PC-9 (cell line): ENCODE measurements at regions of chr9 and their contacts with region 1.

Region 1: DNA sequence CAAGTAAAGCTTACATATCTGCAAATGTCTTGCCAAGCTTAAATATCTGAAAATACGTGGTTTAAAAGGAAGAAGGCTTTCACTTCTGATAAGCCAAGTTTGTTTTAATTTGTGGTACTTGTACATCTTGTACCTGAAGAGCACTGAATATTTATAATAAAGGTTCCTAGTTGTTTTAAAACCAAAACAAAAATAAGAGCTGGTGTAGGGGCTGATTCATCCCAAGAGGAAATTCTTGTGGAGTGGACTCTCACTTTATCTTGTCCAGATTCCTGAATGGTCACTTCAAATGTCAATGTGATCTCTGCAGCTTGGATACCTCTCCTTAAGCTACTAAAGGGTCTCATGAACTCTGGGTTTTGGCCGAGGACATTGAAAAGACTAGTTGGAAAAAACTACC is 29.5 kb downstream of the MAMDC2 start:
- DNase-seq: no peak
- H3K4me3 ChIP-seq: no peak overlapping the region
- H3K27ac ChIP-seq: no peak overlapping the region
- H3K4me1 ChIP-seq: no peaks in the 10 kb centered on the region
- H3K27me3 ChIP-seq: no peaks in the 10 kb centered on the region
- CTCF ChIP-seq: no peak

Region 2: DNA sequence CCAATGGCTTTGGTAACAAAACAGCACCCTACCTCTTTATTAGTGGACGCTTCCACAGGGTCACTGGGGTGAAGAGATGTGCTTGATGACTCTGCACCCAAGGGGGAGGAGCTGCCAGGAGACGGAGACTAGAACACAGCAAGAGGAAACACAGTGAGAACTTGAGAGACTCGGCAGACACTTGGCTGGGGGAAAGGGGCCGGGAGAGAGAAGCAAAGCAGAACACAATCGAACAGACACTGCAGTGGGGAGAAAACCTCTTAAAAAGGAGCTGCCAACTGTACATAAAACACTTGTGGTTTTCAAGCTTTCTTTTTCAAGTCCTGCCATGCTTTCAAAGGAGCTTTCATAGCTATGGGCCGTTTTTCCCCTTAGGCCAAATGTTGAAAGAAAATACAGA is 597.2 kb before region 1 on chr9:
- CTCF ChIA-PET with region 1: no interaction called
- POLR2A ChIA-PET with region 1: no interaction called
- intact Hi-C with region 1: no loop called
- DNase-seq: no peak
- H3K4me3 ChIP-seq: no peak overlapping the region
- H3K27ac ChIP-seq: no peak overlapping the region
- H3K4me1 ChIP-seq: no peaks in the 10 kb centered on the region; the same call in 1 of the 2 replicates
- H3K27me3 ChIP-seq: no peaks in the 10 kb centered on the region
- CTCF ChIP-seq: no peak

Region 3: DNA sequence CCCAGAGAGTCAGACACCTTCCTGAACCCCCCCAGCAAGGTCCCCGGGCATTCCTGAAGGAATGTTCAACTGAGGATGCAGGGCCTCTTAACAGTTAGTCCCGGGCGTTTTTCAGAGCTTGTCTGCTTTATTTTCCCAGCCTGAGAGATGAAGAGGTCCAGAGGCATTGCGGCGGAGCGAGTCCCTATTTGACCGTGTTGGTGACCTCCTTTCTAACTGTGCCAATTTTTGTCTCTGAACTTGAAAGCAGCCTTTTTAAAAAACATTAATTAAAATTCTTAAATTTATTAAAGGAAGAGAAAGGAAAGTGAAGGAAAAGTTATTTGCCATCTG is 312.9 kb before region 1 on chr9:
- CTCF ChIA-PET with region 1: no interaction called
- POLR2A ChIA-PET with region 1: no interaction called
- intact Hi-C with region 1: no loop called
- DNase-seq: no peak
- H3K4me3 ChIP-seq: peak overlapping the region; percentile 67; the same call in 1 of the 2 replicates
- H3K27ac ChIP-seq: peak overlapping the region; percentile 31; the same call in 1 of the 2 replicates
- H3K4me1 ChIP-seq: peaks cover 15% of the 10 kb centered on the region
- H3K27me3 ChIP-seq: no peaks in the 10 kb centered on the region
- CTCF ChIP-seq: no peak

Region 4: DNA sequence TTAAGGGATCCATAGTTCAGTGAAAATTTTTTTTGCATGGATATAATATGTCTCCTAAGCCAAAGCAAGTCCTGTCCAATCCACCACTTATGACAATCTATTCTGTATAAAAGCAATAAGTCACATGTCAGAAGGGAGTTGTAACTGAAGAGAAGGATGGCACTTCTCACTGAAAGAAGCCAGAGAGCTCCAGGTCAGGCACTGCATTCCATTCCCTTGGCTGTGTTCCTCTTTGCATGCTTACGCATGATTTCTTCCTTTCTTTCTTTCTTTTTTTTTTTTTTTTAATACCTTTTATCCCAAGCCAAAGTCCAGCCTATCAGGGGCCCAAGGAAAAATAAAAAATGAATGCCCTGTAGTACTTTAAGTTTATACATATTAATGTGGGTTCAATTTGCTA is 10.2 kb after region 1 on chr9:
- CTCF ChIA-PET with region 1: no interaction called
- POLR2A ChIA-PET with region 1: interaction called, 14 read pairs
- intact Hi-C with region 1: no loop called
- DNase-seq: no peak
- H3K4me3 ChIP-seq: no peak overlapping the region
- H3K27ac ChIP-seq: no peak overlapping the region
- H3K4me1 ChIP-seq: peaks cover 28% of the 10 kb centered on the region
- H3K27me3 ChIP-seq: no peaks in the 10 kb centered on the region
- CTCF ChIP-seq: no peak

Region 5: GRCh38 chr9:70901761-70902160 is 828.6 kb after region 1 on chr9:
- CTCF ChIA-PET with region 1: no interaction called
- POLR2A ChIA-PET with region 1: interaction called, 11 read pairs
- intact Hi-C with region 1: no loop called
- DNase-seq: no peak
- H3K4me3 ChIP-seq: no peak overlapping the region
- H3K27ac ChIP-seq: no peak overlapping the region
- H3K4me1 ChIP-seq: 0 out of 2 replicates have a peak, but pooled peaks cover 7% of the 10 kb centered on the region
- H3K27me3 ChIP-seq: no peaks in the 10 kb centered on the region
- CTCF ChIP-seq: no peak